Mammary epithelial cell (primary cell): ENCODE measurements at regions of chr17 and their contacts with region 1.

Region 1: GRCh38 chr17:79009397-79010308 is at the start of gene CANT1:
- DNase-seq: peak; percentile 73
- H3K4me3 ChIP-seq: peak within 1 kb of the TSS; percentile 55 to 99 (median 80)
- H3K27ac ChIP-seq: peak within 1 kb of the TSS; percentile 57
- H3K4me1 ChIP-seq: peaks cover 48% of the 10 kb centered on the region
- H3K27me3 ChIP-seq: no peaks in the 10 kb centered on the region
- CTCF ChIP-seq: no peak
- total RNA-seq, gene CANT1: 54.5 to 86.5 TPM

Region 2: GRCh38 chr17:78993241-78993956 is 16.3 kb before region 1 on chr17:
- CTCF ChIA-PET with region 1: no interaction called
- dilution Hi-C with region 1: no loop called
- in situ Hi-C with region 1: no loop called
- intact Hi-C with region 1: loop called (anchors 2 kb)
- DNase-seq: no peak
- H3K4me3 ChIP-seq: no peak overlapping the region
- H3K27ac ChIP-seq: no peak overlapping the region
- H3K4me1 ChIP-seq: no peaks in the 10 kb centered on the region
- H3K27me3 ChIP-seq: no peaks in the 10 kb centered on the region
- CTCF ChIP-seq: peak; percentile 73 to 80